Activated CD4-positive, alpha-beta T cell treated with anti-CD3 and anti-CD28 coated beads, Interleukin-2, amount 10 ng/mL, durations not matched to agents 24 days and 14 days (primary cell): ENCODE measurements at regions of chr18 and their contacts with region 1.

Region 1: GRCh38 chr18:13566941-13567746 is 159.2 kb downstream of the FAM210A start:
- DNase-seq: peak; percentile 65
- H3K4me3 Mint-ChIP-seq: peak overlapping the region; percentile 69
- H3K27ac Mint-ChIP-seq: peak overlapping the region; percentile 89
- H3K4me1 Mint-ChIP-seq: peaks cover 64% of the 10 kb centered on the region
- H3K27me3 Mint-ChIP-seq: no peaks in the 10 kb centered on the region

Region 2: GRCh38 chr18:13359210-13359609 is 207.9 kb before region 1 on chr18:
- intact Hi-C with region 1: no loop called
- DNase-seq: no peak
- H3K4me3 Mint-ChIP-seq: no peak overlapping the region
- H3K27ac Mint-ChIP-seq: no peak overlapping the region
- H3K4me1 Mint-ChIP-seq: peaks cover 5% of the 10 kb centered on the region
- H3K27me3 Mint-ChIP-seq: no peaks in the 10 kb centered on the region

Region 3: GRCh38 chr18:13577091-13577697 is 10.1 kb after region 1 on chr18:
- intact Hi-C with region 1: loop called (anchors 1 kb)
- DNase-seq: peak; percentile 85
- H3K4me3 Mint-ChIP-seq: peak overlapping the region; percentile 71
- H3K27ac Mint-ChIP-seq: peak overlapping the region; percentile 82
- H3K4me1 Mint-ChIP-seq: peaks cover 51% of the 10 kb centered on the region
- H3K27me3 Mint-ChIP-seq: no peaks in the 10 kb centered on the region

Region 4: GRCh38 chr18:13585379-13586153 is 18.4 kb after region 1 on chr18:
- intact Hi-C with region 1: loop called (anchors 1 kb)
- DNase-seq: no peak
- H3K4me3 Mint-ChIP-seq: no peak overlapping the region
- H3K27ac Mint-ChIP-seq: no peak overlapping the region
- H3K4me1 Mint-ChIP-seq: peaks cover 59% of the 10 kb centered on the region
- H3K27me3 Mint-ChIP-seq: no peaks in the 10 kb centered on the region

Region 5: GRCh38 chr18:13611601-13612195 is 44.6 kb after region 1 on chr18:
- intact Hi-C with region 1: loop called (anchors 1 kb)
- DNase-seq: no peak
- H3K4me3 Mint-ChIP-seq: peak overlapping the region; percentile 94
- H3K27ac Mint-ChIP-seq: peak overlapping the region; percentile 97
- H3K4me1 Mint-ChIP-seq: peaks cover 72% of the 10 kb centered on the region
- H3K27me3 Mint-ChIP-seq: no peaks in the 10 kb centered on the region

Region 6: DNA sequence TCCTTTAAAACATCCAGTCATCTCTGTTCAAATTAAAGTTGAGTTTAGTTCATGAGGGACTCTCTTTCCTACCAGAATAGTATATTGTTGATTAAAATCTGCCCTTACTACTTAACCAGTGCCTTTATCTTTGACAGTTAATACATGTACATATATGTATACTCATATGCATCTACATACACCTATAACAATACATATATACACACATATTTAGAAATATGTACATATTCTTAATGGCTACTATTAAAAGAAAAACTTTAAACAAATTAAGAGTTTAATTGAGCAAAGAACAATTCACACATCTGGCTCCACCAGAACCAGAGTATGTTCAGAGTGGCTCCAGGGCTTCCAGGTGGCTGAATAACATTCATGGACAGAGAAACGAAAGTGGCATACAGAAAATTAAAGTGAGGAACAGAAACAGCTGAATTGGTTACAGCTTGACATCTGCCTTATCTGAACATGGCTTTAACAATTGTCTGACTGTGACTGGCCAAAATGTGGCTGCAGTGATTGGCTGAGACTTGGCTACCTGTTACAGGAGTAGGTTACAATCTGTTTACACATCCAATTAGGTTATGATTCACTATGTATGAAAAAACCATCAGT is 526.3 kb after region 1 on chr18:
- intact Hi-C with region 1: no loop called
- DNase-seq: no peak
- H3K4me3 Mint-ChIP-seq: no peak overlapping the region
- H3K27ac Mint-ChIP-seq: no peak overlapping the region
- H3K4me1 Mint-ChIP-seq: peaks cover 3% of the 10 kb centered on the region
- H3K27me3 Mint-ChIP-seq: no peaks in the 10 kb centered on the region